Heart left ventricle (tissue), 16 donors: ENCODE measurements at regions of chr20 and their contacts with region 1.

Region 1: DNA sequence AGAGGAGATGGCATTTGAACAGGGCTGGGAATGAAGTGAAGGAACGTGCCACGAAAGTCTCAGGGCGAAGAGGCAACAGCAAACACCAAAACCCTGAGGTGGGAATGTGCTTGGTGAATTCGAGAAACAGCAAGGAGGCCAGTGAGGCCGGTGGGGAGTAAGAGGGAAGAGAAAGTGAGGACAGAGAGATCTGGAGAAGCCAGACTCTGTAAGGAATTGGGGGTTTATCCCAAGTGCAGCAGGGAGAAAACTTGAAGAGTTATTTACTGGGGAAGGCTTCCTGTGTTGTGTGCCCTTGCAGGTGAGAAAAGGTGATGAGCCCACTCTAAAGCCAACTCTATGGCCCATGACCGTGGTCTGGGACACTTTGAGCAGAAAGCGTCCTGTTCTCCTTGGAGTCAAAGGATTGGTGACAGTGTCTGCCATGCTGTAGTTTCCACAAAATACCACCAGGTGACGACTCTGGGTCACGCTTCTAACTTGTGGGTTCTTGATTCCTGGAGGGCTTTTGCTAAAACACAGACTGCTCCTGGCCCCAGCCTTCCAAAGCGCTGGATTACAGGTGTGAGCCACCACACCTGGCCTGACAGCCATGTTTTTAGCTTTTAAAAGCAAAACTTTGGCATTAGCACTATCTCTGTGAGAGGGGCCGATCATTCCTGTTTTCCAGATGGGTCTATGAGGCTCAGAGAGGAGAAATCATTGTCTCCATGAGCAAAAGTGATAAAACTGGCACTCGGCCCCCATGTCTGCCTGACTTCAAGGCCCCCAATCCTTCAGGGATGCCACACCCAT is 18.0 kb upstream of the CSNK2A1 start:
- DNase-seq: peak in 4 of 5 donors; percentile 66 to 76 (median 71)
- ATAC-seq: peak; percentile 70 to 90 (median 80)
- H3K4me3 ChIP-seq: no peak overlapping the region
- H3K27ac ChIP-seq: no peak overlapping the region
- H3K4me1 ChIP-seq: peaks cover 0 to 20% (median 1%) of the 10 kb centered on the region in 12 donors
- H3K27me3 ChIP-seq: no peaks in the 10 kb centered on the region
- CTCF ChIP-seq: peak; percentile 91 to 100 (median 99)
- POLR2A ChIP-seq: no peak

Region 2: DNA sequence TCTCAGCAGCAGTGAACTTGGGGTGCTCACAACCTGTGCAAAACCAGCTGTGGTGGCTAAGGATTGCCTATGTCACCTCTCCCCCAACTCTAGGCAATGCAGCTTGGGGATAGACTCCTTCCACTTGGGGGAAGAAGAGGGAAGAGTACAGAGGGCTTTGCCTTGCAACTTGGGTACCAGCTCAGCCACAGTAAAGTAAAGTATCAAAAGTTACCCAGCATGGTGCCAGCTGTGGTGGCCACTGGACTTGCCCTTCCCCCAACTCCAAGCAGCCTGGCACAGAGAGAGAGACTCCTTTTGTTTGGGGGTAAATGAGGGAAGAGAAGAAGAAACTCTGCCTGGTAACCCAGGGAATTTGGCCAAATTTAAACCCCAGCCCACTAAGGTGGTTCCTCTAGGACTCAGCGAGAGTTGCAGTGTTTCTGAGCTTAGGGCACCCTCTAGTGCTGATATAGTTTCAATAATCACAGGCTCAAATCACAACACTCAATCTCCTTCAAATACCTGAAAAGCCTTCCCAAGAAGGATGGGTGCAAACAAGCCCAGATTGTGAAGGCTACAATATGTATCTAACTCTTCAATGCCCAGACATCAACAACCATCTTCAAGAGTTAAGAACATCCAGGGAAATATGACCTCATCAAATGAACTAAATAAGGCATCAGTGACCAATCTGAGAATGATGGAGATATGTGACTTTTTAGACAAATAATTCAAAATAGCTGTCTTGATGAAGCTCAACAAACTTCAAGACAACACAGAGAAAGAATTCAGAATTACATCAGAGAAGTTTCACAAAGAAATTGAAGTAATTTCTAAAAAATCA is 342.1 kb before region 1 on chr20:
- intact Hi-C with region 1: no loop called
- DNase-seq: no peak
- ATAC-seq: peak in 3 of 4 donors; percentile 63 to 71 (median 66)
- H3K4me3 ChIP-seq: no peak overlapping the region
- H3K27ac ChIP-seq: no peak overlapping the region
- H3K4me1 ChIP-seq: peaks cover 0 to 9% (median 0%) of the 10 kb centered on the region in 12 donors
- H3K27me3 ChIP-seq: peaks cover 0 to 14% (median 0%) of the 10 kb centered on the region in 9 donors
- CTCF ChIP-seq: peak in 10 of 12 donors; percentile 24 to 53 (median 40)
- POLR2A ChIP-seq: no peak

Region 3: GRCh38 chr20:610130-611046 is 48.8 kb after region 1 on chr20 and contains the start of gene TCF15:
- intact Hi-C with region 1: loop called in 2 of 10 experiments (anchors 2 to 5 kb)
- DNase-seq: peak; percentile 75 to 84 (median 78)
- ATAC-seq: peak; percentile 74 to 94 (median 91)
- H3K4me3 ChIP-seq: peak within 1 kb of the TSS; percentile 53 to 92 (median 71)
- H3K27ac ChIP-seq: peak within 1 kb of the TSS; percentile 49 to 93 (median 82)
- H3K4me1 ChIP-seq: peaks cover 0 to 46% (median 21%) of the 10 kb centered on the region in 12 donors
- H3K27me3 ChIP-seq: peaks cover 0 to 44% (median 0%) of the 10 kb centered on the region in 9 donors
- CTCF ChIP-seq: no peak
- POLR2A ChIP-seq: peak; percentile 55 to 84
- total RNA-seq, gene TCF15: 5.8 to 18.0 (median 10.0) TPM

Region 4: DNA sequence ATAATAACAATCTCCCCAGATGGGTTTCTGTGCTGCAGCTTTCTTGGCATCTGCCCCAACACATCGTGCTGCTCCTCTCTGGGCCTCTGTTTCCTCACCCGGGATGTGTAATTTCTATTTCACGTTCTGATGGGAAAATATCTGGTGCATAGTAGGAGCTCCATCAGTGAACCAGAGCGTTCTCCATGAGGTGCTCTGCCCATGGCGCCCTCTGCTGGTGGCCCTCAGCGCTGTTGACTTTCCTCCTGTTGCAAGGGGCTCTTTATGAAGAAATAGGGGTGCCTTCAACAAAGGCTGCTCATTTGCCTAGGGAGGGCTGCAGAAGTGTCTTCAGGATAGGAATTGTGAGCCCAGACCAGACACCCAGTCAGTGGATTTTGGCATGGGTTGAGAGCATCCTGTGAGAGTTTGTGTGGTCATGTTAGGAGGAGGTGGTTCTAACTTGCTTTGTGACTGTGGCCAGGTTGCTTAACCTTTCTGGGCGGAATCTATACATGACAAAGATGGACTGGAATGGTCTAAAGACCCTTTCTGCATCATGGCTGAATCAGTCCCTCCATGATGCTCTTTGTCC is 105.8 kb after region 1 on chr20:
- intact Hi-C with region 1: loop called in 1 of 10 experiments (anchors 5 kb)
- DNase-seq: peak in 2 of 5 donors; percentile 60 to 75
- ATAC-seq: peak in 2 of 4 donors; percentile 45 to 51
- H3K4me3 ChIP-seq: no peak overlapping the region
- H3K27ac ChIP-seq: peak overlapping the region in 11 of 12 donors; percentile 6 to 80 (median 62)
- H3K4me1 ChIP-seq: peaks cover 0 to 53% (median 10%) of the 10 kb centered on the region in 12 donors
- H3K27me3 ChIP-seq: peaks cover 6 to 57% (median 39%) of the 10 kb centered on the region in 9 donors
- CTCF ChIP-seq: peak; percentile 71 to 92 (median 81)
- POLR2A ChIP-seq: no peak

Region 5: DNA sequence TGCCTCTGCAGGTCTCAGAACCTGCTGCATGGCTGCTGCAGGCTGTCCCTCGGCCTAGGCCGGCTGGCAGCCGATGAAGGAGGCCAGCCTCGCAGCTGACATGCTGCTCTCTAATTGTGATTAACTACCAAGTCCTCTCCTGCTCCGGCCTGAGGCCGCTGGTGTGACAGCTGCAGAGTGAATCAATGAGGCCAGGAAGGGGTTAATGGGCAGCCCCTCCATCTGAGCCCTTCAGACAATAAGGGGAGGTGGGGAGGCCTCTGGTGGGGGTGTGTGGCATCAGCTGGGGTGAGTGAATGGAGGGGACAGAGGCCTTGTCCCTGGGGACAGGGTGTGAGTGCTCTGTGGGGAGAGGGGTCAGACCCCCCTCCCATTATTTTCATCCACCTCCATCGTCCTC is 172.2 kb after region 1 on chr20:
- intact Hi-C with region 1: loop called in 9 of 10 experiments (anchors 1 to 5 kb)
- DNase-seq: no peak
- ATAC-seq: no peak
- H3K4me3 ChIP-seq: no peak overlapping the region
- H3K27ac ChIP-seq: no peak overlapping the region
- H3K4me1 ChIP-seq: peaks cover 0 to 2% (median 0%) of the 10 kb centered on the region in 12 donors
- H3K27me3 ChIP-seq: peaks cover 0 to 15% (median 5%) of the 10 kb centered on the region in 9 donors
- CTCF ChIP-seq: no peak
- POLR2A ChIP-seq: no peak

Region 6: GRCh38 chr20:1185790-1186334 is 624.2 kb after region 1 on chr20:
- intact Hi-C with region 1: no loop called
- DNase-seq: peak in 4 of 5 donors; percentile 38 to 55 (median 43)
- ATAC-seq: peak in 3 of 4 donors; percentile 54 to 72 (median 61)
- H3K4me3 ChIP-seq: peak overlapping the region; percentile 42 to 69 (median 58)
- H3K27ac ChIP-seq: peak overlapping the region in 5 of 12 donors; percentile 46 to 66 (median 47)
- H3K4me1 ChIP-seq: peaks cover 0 to 35% (median 8%) of the 10 kb centered on the region in 12 donors
- H3K27me3 ChIP-seq: peaks cover 0 to 38% (median 9%) of the 10 kb centered on the region in 9 donors
- CTCF ChIP-seq: peak; percentile 32 to 64 (median 46)
- POLR2A ChIP-seq: no peak